ENCODE measurements at regions of chr2 and their contacts with region 1.

Region 1: GRCh38 chr2:41698678-41699422 is 349.0 kb upstream of the PKDCC start:
- DNase-seq: peak; percentile 85
- H3K4me3 ChIP-seq: peak overlapping the region in 1 of 2 experiments; percentile 12; a peak in 1 of 4 replicates
- H3K27ac ChIP-seq: no peak overlapping the region
- H3K4me1 ChIP-seq: peaks cover 0 to 6% of the 10 kb centered on the region in 2 experiments; a peak in 1 of 4 replicates
- H3K27me3 ChIP-seq: no peaks in the 10 kb centered on the region
- CTCF ChIP-seq: peak; percentile 92
- EP300 ChIP-seq: no peak
- RAD21 ChIP-seq: peak; percentile 96

Region 2: GRCh38 chr2:40212804-40213470 is 1485.9 kb before region 1 on chr2:
- CTCF ChIA-PET with region 1: interaction called, 10 read pairs
- POLR2A ChIA-PET with region 1: no interaction called
- DNase-seq: no peak
- H3K4me3 ChIP-seq: no peak overlapping the region
- H3K27ac ChIP-seq: no peak overlapping the region
- H3K4me1 ChIP-seq: no peaks in the 10 kb centered on the region; a peak in 1 of 4 replicates
- H3K27me3 ChIP-seq: no peaks in the 10 kb centered on the region
- CTCF ChIP-seq: peak; percentile 61
- EP300 ChIP-seq: no peak
- RAD21 ChIP-seq: peak; percentile 65

Region 3: DNA sequence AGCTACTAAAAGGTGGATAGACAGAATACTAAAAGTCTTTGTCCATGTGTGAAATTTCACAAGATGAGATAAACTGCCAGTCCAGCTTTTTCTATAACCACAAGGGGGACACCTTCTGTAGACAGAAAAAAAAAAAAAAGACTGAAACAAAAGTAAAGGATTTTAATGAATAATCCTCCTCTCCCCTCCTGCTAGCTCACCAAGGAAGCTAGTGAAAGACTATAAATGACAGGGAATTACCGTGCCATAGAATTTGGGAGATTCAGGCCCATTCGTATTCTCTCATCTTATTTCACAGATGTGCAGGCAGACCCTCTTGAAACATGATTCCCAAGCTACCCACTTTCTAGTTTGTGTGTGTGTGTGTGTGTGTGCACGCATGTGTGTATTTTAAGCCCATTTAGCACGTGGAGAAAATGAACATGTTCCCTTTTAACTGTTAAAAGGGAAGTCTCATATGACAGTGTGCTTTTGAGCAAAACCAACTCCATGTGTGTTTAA is 1210.7 kb before region 1 on chr2:
- CTCF ChIA-PET with region 1: interaction called, 15 read pairs
- POLR2A ChIA-PET with region 1: no interaction called
- DNase-seq: peak; percentile 32
- H3K4me3 ChIP-seq: no peak overlapping the region
- H3K27ac ChIP-seq: no peak overlapping the region
- H3K4me1 ChIP-seq: peaks cover 0 to 3% of the 10 kb centered on the region in 2 experiments; a peak in 1 of 4 replicates
- H3K27me3 ChIP-seq: no peaks in the 10 kb centered on the region
- CTCF ChIP-seq: peak; percentile 74
- EP300 ChIP-seq: no peak
- RAD21 ChIP-seq: peak; percentile 58

Region 4: DNA sequence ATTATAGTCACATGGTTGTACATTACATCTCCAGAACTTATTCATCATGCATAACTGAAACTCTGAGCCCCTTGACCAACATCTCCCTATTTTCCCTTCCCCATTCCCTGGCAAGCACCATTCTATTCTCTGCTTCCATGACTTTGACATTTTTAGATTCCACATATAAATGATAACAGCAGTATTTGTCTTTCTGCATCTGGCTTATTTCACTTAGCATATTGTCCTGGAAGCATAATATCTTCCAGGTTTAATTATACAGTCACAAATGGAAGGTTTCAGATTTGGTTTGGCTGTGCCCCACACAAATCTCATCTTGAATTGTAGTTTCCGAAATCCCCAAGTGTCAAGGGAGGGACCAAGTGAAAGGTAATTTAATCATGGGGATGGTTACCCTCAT is 278.0 kb before region 1 on chr2:
- CTCF ChIA-PET with region 1: interaction called, 133 read pairs
- POLR2A ChIA-PET with region 1: no interaction called
- DNase-seq: no peak
- H3K4me3 ChIP-seq: no peak overlapping the region
- H3K27ac ChIP-seq: no peak overlapping the region
- H3K4me1 ChIP-seq: no peaks in the 10 kb centered on the region
- H3K27me3 ChIP-seq: no peaks in the 10 kb centered on the region
- CTCF ChIP-seq: no peak
- EP300 ChIP-seq: no peak
- RAD21 ChIP-seq: no peak

Region 5: GRCh38 chr2:41686156-41686555 is 12.7 kb before region 1 on chr2:
- CTCF ChIA-PET with region 1: interaction called, 56 read pairs
- POLR2A ChIA-PET with region 1: no interaction called
- DNase-seq: no peak
- H3K4me3 ChIP-seq: no peak overlapping the region
- H3K27ac ChIP-seq: no peak overlapping the region
- H3K4me1 ChIP-seq: no peaks in the 10 kb centered on the region
- H3K27me3 ChIP-seq: no peaks in the 10 kb centered on the region
- CTCF ChIP-seq: no peak
- EP300 ChIP-seq: no peak
- RAD21 ChIP-seq: no peak

Region 6: GRCh38 chr2:41728788-41729338 is 30.0 kb after region 1 on chr2:
- CTCF ChIA-PET with region 1: interaction called, 22 read pairs
- POLR2A ChIA-PET with region 1: no interaction called
- DNase-seq: no peak
- H3K4me3 ChIP-seq: no peak overlapping the region
- H3K27ac ChIP-seq: no peak overlapping the region
- H3K4me1 ChIP-seq: no peaks in the 10 kb centered on the region; a peak in 1 of 4 replicates
- H3K27me3 ChIP-seq: no peaks in the 10 kb centered on the region; the same call in 1 of the 2 replicates
- CTCF ChIP-seq: no peak
- EP300 ChIP-seq: no peak
- RAD21 ChIP-seq: no peak

Region 7: GRCh38 chr2:41869542-41870264 is 170.9 kb after region 1 on chr2:
- CTCF ChIA-PET with region 1: no interaction called
- POLR2A ChIA-PET with region 1: no interaction called
- DNase-seq: peak; percentile 86
- H3K4me3 ChIP-seq: no peak overlapping the region; a peak in 1 of 4 replicates
- H3K27ac ChIP-seq: peak overlapping the region in 1 of 2 experiments; percentile 39; a peak in 1 of 4 replicates
- H3K4me1 ChIP-seq: peaks cover 0 to 26% of the 10 kb centered on the region in 2 experiments; a peak in 3 of 4 replicates
- H3K27me3 ChIP-seq: no peaks in the 10 kb centered on the region
- CTCF ChIP-seq: peak; percentile 91
- EP300 ChIP-seq: 0 out of 4 replicates have a peak, but pooled peaks of 1 of the 2 experiments have one; percentile 16
- RAD21 ChIP-seq: peak; percentile 100